HEK293 (cell line): ENCODE measurements at regions of chr12 and their contacts with region 1.

Region 1: DNA sequence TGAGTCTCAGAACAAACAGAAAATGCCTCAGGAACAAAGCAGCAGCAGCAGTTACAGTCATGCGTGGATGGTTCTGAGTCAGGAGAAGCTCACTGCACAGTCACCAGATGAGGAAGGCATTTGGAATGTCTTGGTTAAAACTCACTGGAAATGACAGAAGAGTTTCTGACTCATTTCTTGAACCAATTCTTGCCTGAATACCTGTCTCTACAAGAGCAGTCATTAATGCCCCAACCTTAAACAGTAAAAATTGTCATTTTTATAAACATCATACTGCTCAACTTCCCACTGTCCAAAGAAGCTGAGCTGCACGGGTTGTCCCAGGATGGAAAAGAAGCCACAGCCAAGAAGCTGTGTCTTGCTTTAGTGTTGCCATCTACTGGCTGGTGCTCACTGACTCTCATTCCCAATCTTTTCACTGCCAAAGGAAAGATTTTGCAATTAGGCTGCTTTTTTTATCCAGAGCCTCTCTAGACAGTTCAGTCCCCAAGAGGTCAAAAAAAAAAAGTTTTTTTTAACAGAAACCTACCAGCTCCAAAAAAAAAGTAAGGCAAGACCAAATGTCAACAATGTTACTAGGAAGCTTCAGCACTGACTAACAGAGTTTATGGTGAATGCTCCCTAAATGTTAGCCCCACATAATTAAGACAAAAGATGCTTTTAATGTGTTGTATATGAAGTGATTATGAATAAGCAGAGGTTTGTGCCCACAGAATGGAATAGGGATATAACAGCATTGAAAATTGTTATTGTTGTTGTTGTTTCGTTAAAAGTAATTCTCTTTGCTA is 40.4 kb downstream of the KICS2 start:
- H3K4me3 ChIP-seq: no peak overlapping the region
- H3K27ac ChIP-seq: no peak overlapping the region
- H3K4me1 ChIP-seq: no peaks in the 10 kb centered on the region
- CTCF ChIP-seq: peak; percentile 24; the same call in 1 of the 2 replicates

Region 2: DNA sequence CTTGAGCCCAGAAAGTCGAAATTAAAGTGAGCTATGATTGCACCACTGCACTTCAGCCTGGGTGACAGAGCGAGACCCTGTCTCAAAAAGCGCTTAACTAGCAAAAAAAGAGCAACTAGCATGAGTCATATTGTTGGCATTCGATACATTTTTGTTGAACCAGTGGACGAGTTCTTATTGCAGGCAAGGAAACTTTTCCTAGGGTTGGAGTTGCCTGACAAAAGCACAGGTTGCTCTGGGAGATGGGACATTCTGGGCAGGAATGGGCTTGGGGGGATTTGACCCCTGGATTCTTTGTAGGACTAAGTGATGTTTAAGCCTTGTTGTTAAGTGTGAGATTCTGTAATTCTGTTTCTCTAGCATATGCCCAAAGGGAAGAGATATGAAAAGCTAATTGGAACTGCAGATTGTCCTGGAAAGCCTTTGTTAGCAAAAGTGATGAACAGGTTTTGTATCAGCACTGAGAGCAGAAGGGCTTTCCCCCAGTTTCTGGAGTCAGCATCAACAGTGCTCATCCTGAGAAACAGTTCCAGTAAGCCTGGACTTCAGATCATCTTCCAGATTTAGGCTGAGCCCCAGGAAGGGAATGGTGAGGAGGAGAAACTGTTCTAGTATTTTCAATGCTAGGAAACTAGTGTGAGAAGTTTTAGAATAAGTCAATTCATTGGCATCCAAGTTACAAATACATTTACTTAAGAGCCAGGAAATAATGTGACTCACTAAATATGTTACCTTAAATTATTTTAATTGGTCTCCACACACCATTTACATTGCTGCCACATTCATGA is 214.1 kb before region 1 on chr12:
- CTCF ChIA-PET with region 1: interaction called, 11 read pairs
- POLR2A ChIA-PET with region 1: no interaction called
- H3K4me3 ChIP-seq: no peak overlapping the region
- H3K27ac ChIP-seq: no peak overlapping the region
- H3K4me1 ChIP-seq: no peaks in the 10 kb centered on the region
- CTCF ChIP-seq: no peak